Activated CD4-positive, alpha-beta T cell treated with anti-CD3 and anti-CD28 coated beads, Interleukin-2, amount 10 ng/mL, durations not matched to agents 24 days and 14 days (primary cell): ENCODE measurements at regions of chr5 and their contacts with region 1.

Region 1: DNA sequence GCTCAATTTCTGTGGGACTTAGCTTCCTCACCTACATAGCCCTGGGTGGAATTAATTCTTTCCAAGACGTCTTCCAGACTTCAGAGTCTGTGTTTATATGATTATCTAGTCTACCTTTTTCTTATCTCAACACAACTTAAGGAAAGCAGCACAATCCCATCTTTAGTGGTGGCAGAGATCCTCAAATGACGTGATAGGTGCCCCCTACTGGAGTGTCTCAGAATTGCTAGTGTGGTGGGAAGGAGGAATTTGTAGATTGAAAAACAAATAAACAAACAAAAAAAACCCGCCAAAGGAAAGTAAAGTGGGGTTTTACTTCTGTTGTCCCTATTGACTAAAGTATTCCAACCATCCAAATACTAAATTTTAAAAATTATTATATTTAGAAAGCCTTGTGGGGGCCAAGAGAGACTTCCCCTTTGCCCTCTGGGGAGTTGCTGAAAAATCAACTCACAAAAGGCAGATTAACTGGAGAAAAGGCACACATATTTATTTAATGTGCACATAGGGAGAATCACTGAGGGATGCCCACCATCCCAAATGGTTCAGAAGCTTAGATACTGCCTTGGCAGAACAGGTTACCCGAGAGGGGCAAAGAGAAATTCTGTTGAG is 283.3 kb downstream of the TMEM167A start:
- DNase-seq: peak; percentile 81
- H3K4me3 Mint-ChIP-seq: no peak overlapping the region
- H3K27ac Mint-ChIP-seq: no peak overlapping the region
- H3K4me1 Mint-ChIP-seq: peaks cover 4% of the 10 kb centered on the region
- H3K27me3 Mint-ChIP-seq: peaks cover 10% of the 10 kb centered on the region

Region 2: DNA sequence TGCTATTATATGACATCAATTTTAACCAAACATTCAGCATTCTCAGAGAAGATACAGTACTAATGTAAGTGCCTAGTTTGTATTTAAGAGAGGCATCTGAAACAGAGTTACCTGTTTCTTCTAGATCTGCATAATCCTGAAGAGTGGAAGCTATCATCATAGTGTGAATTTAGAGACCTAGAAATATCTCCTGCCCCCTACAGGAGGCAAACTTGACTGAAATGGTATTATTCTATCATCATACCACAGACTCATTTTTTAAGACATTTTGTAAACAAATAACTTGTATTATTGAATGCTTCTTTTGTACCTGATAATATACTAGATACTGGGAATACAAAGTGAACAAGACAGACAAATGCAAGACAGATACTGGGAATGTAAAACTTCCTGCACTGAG is 299.0 kb before region 1 on chr5:
- intact Hi-C with region 1: loop called (anchors 5 kb)
- DNase-seq: no peak
- H3K4me3 Mint-ChIP-seq: no peak overlapping the region
- H3K27ac Mint-ChIP-seq: no peak overlapping the region
- H3K4me1 Mint-ChIP-seq: peaks cover 1% of the 10 kb centered on the region
- H3K27me3 Mint-ChIP-seq: peaks cover 11% of the 10 kb centered on the region

Region 3: DNA sequence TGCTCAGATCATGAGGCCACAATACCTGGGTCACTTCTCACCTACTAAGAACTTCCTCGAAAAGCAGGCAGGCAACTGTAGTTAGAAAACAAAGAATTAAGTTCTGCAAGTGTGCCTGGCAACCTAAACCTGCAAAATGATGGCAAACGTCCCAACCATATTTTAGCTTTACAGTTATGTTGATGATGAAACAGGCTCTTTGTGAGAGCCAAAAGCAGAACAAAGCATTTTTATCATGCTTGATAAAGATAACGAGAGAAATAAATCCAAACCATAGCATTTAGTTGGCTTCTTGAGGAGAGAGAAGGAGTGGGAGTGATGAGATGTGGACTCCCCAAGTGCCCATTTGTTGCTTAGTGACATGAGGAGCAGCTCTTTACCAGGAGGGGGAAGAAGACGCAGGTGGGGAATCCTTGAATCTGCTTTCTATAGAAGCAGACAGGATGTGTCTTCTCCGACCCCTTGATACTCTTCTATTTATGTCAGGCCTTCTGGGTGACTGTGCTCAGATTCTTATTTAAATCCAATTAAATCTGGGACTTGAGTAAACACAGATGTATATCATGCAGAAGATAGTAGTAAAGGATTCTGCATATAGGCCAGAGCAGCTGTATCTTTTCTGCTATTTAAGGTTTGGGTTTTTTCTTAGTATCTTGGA is 62.1 kb after region 1 on chr5:
- intact Hi-C with region 1: no loop called
- DNase-seq: no peak
- H3K4me3 Mint-ChIP-seq: no peak overlapping the region
- H3K27ac Mint-ChIP-seq: no peak overlapping the region
- H3K4me1 Mint-ChIP-seq: no peaks in the 10 kb centered on the region
- H3K27me3 Mint-ChIP-seq: no peaks in the 10 kb centered on the region